A673 (cell line): ENCODE measurements at regions of chr11 and their contacts with region 1.

Region 1: GRCh38 chr11:47724041-47724729 is 9.0 kb upstream of the AGBL2 start:
- DNase-seq: peak; percentile 32
- H3K4me3 ChIP-seq: no peak overlapping the region
- H3K27ac ChIP-seq: no peak overlapping the region
- H3K4me1 ChIP-seq: no peaks in the 10 kb centered on the region
- H3K27me3 ChIP-seq: no peaks in the 10 kb centered on the region
- CTCF ChIP-seq: no peak

Region 2: DNA sequence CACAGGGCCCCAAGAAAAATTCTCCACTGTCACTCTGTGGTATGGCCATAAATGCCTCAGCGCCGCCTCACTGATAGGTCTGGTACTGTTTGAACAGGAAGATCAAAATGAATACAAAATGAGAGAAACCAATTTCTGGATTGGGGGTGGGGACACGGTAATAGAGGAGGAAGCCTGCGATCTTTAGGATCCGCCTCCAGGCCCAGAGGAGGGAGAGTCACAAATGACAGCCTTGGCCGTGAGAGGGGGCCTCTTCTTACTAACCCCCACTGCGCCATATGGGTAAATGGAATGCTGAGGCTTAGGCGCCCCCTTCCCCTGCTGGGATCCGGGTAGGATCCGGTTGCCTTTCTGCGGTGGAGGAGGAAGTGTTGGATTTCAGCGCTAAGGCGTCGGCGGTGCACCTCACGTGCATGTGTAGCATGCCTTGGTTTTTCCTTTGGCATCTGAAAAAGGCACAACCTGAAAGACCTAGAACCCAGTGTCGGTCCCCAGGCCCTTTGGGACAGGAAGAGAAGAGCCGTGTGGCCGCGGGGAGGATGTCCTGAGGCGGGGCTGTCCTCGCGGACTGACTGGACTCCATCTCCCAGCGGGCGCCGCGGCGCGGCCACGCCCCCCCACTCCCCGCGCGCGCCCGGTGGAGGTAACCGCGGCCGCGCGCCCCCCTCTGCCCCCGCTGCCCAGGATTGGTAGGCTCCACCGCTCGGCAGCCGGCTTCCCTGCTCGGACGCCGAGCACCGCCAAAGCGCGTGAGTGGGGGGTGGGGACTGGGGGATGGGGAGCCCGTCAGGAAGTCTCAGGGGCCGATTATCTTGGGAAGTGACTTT is 455.0 kb before region 1 on chr11:
- CTCF ChIA-PET with region 1: no interaction called
- POLR2A ChIA-PET with region 1: no interaction called
- intact Hi-C with region 1: no loop called
- DNase-seq: peak; percentile 99
- H3K4me3 ChIP-seq: peak overlapping the region; percentile 65
- H3K27ac ChIP-seq: peak overlapping the region; percentile 95
- H3K4me1 ChIP-seq: peaks cover 42% of the 10 kb centered on the region
- H3K27me3 ChIP-seq: no peaks in the 10 kb centered on the region
- CTCF ChIP-seq: peak; percentile 54

Region 3: DNA sequence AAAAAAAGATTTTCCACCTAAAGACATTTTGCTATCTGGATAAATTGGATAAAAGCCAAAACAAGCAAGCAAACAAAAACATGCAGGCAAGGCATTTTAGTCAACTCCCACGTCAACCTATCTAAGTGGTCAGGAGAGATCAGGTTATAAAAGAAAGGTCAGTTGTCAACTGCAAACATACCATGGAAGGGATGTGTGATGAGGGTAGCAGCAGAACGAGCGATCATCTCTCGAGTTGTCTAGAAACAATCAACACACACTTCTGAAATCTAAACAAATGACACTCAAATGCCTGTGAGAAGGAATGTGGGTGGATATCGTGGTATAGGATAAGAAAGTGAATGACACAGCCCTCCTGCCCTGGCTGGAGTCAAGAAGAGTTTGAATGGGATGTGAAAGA is 92.7 kb before region 1 on chr11:
- CTCF ChIA-PET with region 1: no interaction called
- POLR2A ChIA-PET with region 1: interaction called, 27 read pairs
- intact Hi-C with region 1: no loop called
- DNase-seq: no peak
- H3K4me3 ChIP-seq: no peak overlapping the region
- H3K27ac ChIP-seq: no peak overlapping the region
- H3K4me1 ChIP-seq: no peaks in the 10 kb centered on the region
- H3K27me3 ChIP-seq: no peaks in the 10 kb centered on the region
- CTCF ChIP-seq: no peak